ENCODE measurements at regions of chr16 and their contacts with region 1.

Region 1: GRCh38 chr16:67561824-67562525 is 351 bp upstream of the CTCF start:
- DNase-seq: peak; percentile 91 to 98 (median 96)
- ATAC-seq: peak; percentile 74
- H3K4me3 Mint-ChIP-seq: peak overlapping the region; percentile 87 to 95 (median 90)
- H3K27ac Mint-ChIP-seq: peak overlapping the region; percentile 72 to 98 (median 96)
- H3K4me1 Mint-ChIP-seq: peaks cover 14 to 64% (median 45%) of the 10 kb centered on the region in 4 donors
- H3K27me3 Mint-ChIP-seq: no peaks in the 10 kb centered on the region

Region 2: GRCh38 chr16:67470359-67470758 is 91.6 kb before region 1 on chr16:
- POLR2A ChIA-PET with region 1: no interaction called
- DNase-seq: no peak
- ATAC-seq: no peak
- H3K4me3 Mint-ChIP-seq: no peak overlapping the region
- H3K27ac Mint-ChIP-seq: peak overlapping the region in 1 of 10 donors; percentile 23
- H3K4me1 Mint-ChIP-seq: peaks cover 39 to 72% (median 66%) of the 10 kb centered on the region in 4 donors
- H3K27me3 Mint-ChIP-seq: no peaks in the 10 kb centered on the region

Region 3: DNA sequence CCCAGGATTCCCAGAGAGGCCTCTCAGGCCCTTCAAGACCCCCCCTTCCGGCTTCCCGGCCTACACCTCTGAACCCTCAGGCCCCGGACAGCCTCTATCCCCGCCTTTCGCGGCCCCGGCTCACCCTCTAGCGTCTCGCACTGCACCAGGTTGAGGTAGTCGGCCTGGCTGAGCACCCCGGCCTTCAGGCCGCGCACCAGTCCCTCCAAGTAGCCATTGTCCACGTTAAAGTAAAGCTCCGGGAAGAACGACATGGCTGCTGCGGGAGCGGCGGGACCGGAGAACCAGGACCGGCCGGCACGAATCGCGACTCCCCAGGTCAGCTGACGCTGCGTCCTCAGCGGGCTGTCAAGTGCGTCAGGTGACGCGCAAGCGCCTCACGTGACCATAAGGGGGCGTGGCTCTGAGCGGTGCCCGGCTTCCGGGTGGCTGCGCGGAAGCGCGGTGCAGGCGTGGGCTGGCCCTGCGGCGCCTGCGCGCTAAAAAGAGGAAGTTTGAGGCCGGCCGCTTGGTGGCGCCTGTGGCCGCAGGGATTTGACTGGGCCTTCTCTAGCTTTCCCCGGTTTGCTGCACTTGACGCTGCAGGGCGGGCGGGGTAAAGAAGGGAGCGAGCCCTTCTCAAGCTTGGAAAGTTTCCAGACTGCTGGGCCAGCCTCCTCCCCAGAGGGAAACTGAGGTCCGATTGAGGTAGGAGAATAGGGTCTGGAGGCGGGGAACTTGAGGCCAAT is 81.0 kb before region 1 on chr16 and contains the start of gene ATP6V0D1:
- POLR2A ChIA-PET with region 1: interaction called, 13 read pairs
- DNase-seq: peak; percentile 97 to 99 (median 98)
- ATAC-seq: peak; percentile 83 to 91
- H3K4me3 Mint-ChIP-seq: peak within 1 kb of the TSS; percentile 95 to 100 (median 98)
- H3K27ac Mint-ChIP-seq: peak within 1 kb of the TSS; percentile 89 to 100 (median 98)
- H3K4me1 Mint-ChIP-seq: peaks cover 18 to 70% (median 53%) of the 10 kb centered on the region in 4 donors
- H3K27me3 Mint-ChIP-seq: no peaks in the 10 kb centered on the region
- polyA plus RNA-seq, gene ATP6V0D1: 74.7 to 89.6 (median 77.5) TPM

Region 4: DNA sequence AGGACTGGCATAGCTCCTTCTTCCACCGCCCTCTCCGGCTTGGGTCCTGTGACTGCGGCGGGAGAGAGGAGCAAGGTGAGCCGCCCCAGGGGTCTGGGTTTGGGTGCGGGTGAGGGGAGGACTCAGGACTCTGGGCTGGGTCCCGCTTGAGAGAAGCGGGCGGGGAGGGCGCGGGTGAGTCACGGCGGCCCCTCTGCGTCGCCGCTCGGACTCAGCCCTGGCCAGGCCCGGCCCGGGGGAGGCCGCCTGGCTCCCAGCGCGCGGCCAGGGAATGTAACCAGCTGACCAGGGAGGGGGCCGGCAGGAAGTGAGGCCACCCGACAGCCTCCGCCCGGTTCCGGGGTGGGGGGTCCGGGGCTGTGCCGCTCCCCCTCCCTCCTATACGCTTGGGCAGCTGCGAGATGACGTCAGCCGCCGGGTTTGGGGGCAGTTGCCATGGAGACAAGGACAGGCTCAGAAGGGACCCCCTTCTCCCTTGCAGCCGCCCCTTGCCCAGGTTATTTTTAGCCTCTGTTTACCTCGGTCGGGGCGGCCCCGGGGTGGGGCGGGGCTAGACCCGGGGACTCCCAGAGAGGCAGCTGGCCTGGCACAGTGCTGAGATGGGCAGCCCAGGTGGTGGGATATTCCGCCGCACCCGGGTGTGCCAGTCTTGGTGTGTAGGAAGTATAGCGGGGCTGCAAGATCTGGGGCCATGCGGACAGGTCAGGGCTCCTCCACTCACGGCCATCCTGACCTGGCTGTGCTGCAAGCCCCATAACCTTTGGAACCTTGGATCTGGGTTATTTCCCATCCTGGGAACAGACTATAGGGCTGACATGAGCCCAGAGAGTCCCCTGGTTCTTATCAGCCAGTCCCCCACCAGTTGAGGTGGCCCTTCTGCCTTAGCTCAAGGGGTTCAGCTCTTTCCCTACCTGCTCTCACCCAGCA is 31.7 kb before region 1 on chr16:
- POLR2A ChIA-PET with region 1: interaction called, 485 read pairs
- DNase-seq: peak in 6 of 10 donors; percentile 14 to 78 (median 34)
- ATAC-seq: peak; percentile 48 to 63
- H3K4me3 Mint-ChIP-seq: peak overlapping the region; percentile 65 to 89 (median 84)
- H3K27ac Mint-ChIP-seq: peak overlapping the region in 7 of 10 donors; percentile 14 to 83 (median 81)
- H3K4me1 Mint-ChIP-seq: peaks cover 21 to 44% (median 30%) of the 10 kb centered on the region in 4 donors
- H3K27me3 Mint-ChIP-seq: peaks cover 0 to 24% (median 6%) of the 10 kb centered on the region in 5 donors

Region 5: GRCh38 chr16:67641779-67642708 is 80.1 kb after region 1 on chr16:
- POLR2A ChIA-PET with region 1: interaction called, 92 read pairs
- DNase-seq: no peak
- ATAC-seq: no peak
- H3K4me3 Mint-ChIP-seq: no peak overlapping the region
- H3K27ac Mint-ChIP-seq: peak overlapping the region in 2 of 10 donors; percentile 4 to 53
- H3K4me1 Mint-ChIP-seq: peaks cover 4 to 21% (median 16%) of the 10 kb centered on the region in 4 donors
- H3K27me3 Mint-ChIP-seq: no peaks in the 10 kb centered on the region

Region 6: GRCh38 chr16:67667817-67668494 is 106.0 kb after region 1 on chr16:
- POLR2A ChIA-PET with region 1: interaction called, 32 read pairs
- DNase-seq: peak; percentile 65 to 91 (median 84)
- ATAC-seq: peak; percentile 89 to 92
- H3K4me3 Mint-ChIP-seq: peak overlapping the region; percentile 53 to 95 (median 84)
- H3K27ac Mint-ChIP-seq: peak overlapping the region in 6 of 10 donors; percentile 61 to 90 (median 79)
- H3K4me1 Mint-ChIP-seq: peaks cover 9 to 30% (median 27%) of the 10 kb centered on the region in 4 donors
- H3K27me3 Mint-ChIP-seq: no peaks in the 10 kb centered on the region